ENCODE measurements at regions of chr3 and their contacts with region 1.

Region 1: GRCh38 chr3:100002599-100003350 is 111.5 kb downstream of the FILIP1L start:
- DNase-seq: no peak
- ATAC-seq: peak in 6 of 8 donors; percentile 42 to 74 (median 64)
- H3K4me3 ChIP-seq: no peak overlapping the region
- H3K27ac ChIP-seq: peak overlapping the region in 1 of 10 donors; percentile 5
- H3K4me1 ChIP-seq: peaks cover 15 to 57% (median 35%) of the 10 kb centered on the region in 9 donors
- H3K27me3 ChIP-seq: no peaks in the 10 kb centered on the region
- CTCF ChIP-seq: no peak

Region 2: GRCh38 chr3:99875929-99876841 is 126.6 kb before region 1 on chr3:
- intact Hi-C with region 1: loop called in 5 of 10 experiments (anchors 5 to 10 kb)
- DNase-seq: peak; percentile 84 to 86
- ATAC-seq: peak; percentile 94 to 97 (median 94)
- H3K4me3 ChIP-seq: peak overlapping the region; percentile 55 to 88 (median 75)
- H3K27ac ChIP-seq: peak overlapping the region; percentile 70 to 98 (median 94)
- H3K4me1 ChIP-seq: peaks cover 2 to 65% (median 44%) of the 10 kb centered on the region in 9 donors
- H3K27me3 ChIP-seq: no peaks in the 10 kb centered on the region
- CTCF ChIP-seq: peak in 3 of 9 donors; percentile 23 to 40 (median 40)

Region 3: GRCh38 chr3:99929745-99930139 is 73.0 kb before region 1 on chr3:
- intact Hi-C with region 1: loop called in 2 of 10 experiments (anchors 10 kb)
- DNase-seq: peak; percentile 23 to 43
- ATAC-seq: peak in 6 of 8 donors; percentile 26 to 51 (median 38)
- H3K4me3 ChIP-seq: no peak overlapping the region
- H3K27ac ChIP-seq: peak overlapping the region in 9 of 10 donors; percentile 11 to 76 (median 54)
- H3K4me1 ChIP-seq: peaks cover 10 to 64% (median 37%) of the 10 kb centered on the region in 9 donors
- H3K27me3 ChIP-seq: no peaks in the 10 kb centered on the region
- CTCF ChIP-seq: no peak

Region 4: GRCh38 chr3:99938270-99938911 is 64.4 kb before region 1 on chr3:
- intact Hi-C with region 1: loop called in 4 of 10 experiments (anchors 5 to 10 kb)
- DNase-seq: no peak
- ATAC-seq: peak in 1 of 8 donors; percentile 28
- H3K4me3 ChIP-seq: no peak overlapping the region
- H3K27ac ChIP-seq: peak overlapping the region in 7 of 10 donors; percentile 4 to 70 (median 42)
- H3K4me1 ChIP-seq: peaks cover 0 to 62% (median 42%) of the 10 kb centered on the region in 9 donors
- H3K27me3 ChIP-seq: no peaks in the 10 kb centered on the region
- CTCF ChIP-seq: no peak

Region 5: DNA sequence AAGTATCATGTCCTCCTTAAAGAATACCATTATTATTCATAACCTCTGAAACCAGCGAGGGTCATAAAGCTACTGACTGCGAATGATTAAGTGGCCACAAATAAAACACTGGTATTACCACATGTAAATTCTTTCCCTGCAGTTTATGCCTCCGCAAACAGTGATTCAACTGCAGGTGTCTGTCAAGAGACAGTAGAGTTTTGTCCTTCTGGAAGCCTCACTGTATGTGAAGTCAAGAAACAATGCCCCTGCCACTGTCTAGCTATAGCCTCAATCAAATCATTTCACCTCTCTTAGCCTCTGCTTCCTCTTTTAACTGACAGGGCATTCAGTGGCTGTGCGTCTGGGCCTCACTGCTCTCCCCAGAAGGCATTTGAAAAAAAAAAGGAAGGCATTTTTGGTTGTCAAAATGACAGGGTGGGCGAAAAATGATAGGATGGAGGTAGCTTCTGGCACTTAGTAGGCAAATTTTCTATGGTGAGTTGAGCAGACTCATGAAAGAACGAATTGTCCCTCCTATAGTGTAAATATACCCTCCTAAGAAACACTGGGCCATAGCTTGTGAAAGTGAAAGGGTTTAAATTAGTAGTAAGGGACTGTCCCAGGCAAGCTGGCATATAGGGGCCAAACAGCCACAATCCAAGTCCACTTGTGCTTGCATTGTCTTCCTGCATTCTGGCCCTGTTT is 44.8 kb after region 1 on chr3:
- intact Hi-C with region 1: loop called in 2 of 10 experiments (anchors 5 kb)
- DNase-seq: peak in 1 of 2 donors; percentile 16
- ATAC-seq: peak in 6 of 8 donors; percentile 15 to 47 (median 37)
- H3K4me3 ChIP-seq: peak overlapping the region in 1 of 10 donors; percentile 2
- H3K27ac ChIP-seq: peak overlapping the region in 8 of 10 donors; percentile 42 to 91 (median 79)
- H3K4me1 ChIP-seq: peaks cover 3 to 62% (median 36%) of the 10 kb centered on the region in 9 donors
- H3K27me3 ChIP-seq: no peaks in the 10 kb centered on the region
- CTCF ChIP-seq: no peak

Measured in heart right ventricle (tissue), 16 donors.